Activated CD8-positive, alpha-beta T cell treated with anti-CD3 and anti-CD28 coated beads, Interleukin-2, amount 10 ng/mL, durations not matched to agents 7 days and 5 days (primary cell): ENCODE measurements at regions of chr3 and their contacts with region 1.

Region 1: GRCh38 chr3:108914774-108915641 is 38.7 kb downstream of the GUCA1C start:
- DNase-seq: peak; percentile 77
- ATAC-seq: peak; percentile 96
- H3K4me3 Mint-ChIP-seq: no peak overlapping the region
- H3K27ac Mint-ChIP-seq: peak overlapping the region; percentile 26
- H3K4me1 Mint-ChIP-seq: peaks cover 16% of the 10 kb centered on the region
- H3K27me3 Mint-ChIP-seq: peaks cover 18% of the 10 kb centered on the region

Region 2: GRCh38 chr3:108602249-108602934 is 312.6 kb before region 1 on chr3:
- CTCF ChIA-PET with region 1: interaction called, 14 read pairs
- POLR2A ChIA-PET with region 1: no interaction called
- DNase-seq: peak; percentile 66
- ATAC-seq: peak; percentile 78
- H3K4me3 Mint-ChIP-seq: peak overlapping the region; percentile 65
- H3K27ac Mint-ChIP-seq: peak overlapping the region; percentile 86
- H3K4me1 Mint-ChIP-seq: peaks cover 54% of the 10 kb centered on the region
- H3K27me3 Mint-ChIP-seq: no peaks in the 10 kb centered on the region

Region 3: GRCh38 chr3:108669208-108669607 is 245.8 kb before region 1 on chr3:
- CTCF ChIA-PET with region 1: interaction called, 131 read pairs
- POLR2A ChIA-PET with region 1: no interaction called
- DNase-seq: no peak
- ATAC-seq: no peak
- H3K4me3 Mint-ChIP-seq: no peak overlapping the region
- H3K27ac Mint-ChIP-seq: no peak overlapping the region
- H3K4me1 Mint-ChIP-seq: peaks cover 19% of the 10 kb centered on the region
- H3K27me3 Mint-ChIP-seq: no peaks in the 10 kb centered on the region

Region 4: DNA sequence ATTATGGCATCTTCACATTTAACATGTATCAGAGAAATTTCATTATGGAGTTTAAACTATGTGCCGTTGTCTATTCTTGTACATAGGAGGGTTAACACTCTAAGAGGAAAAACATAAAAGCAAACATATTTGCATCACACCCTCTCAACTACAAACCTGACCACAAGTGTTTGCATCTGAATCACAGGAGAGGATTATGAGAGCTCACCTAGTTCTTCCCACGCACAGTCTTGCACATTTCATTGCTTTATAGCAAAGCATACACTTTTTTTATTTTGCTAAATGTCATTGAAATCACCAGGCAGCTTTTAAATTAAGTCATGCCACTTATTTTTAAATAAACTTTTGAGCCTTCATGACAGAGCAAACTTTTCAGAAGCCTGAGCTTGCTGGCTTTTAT is 79.9 kb before region 1 on chr3:
- CTCF ChIA-PET with region 1: interaction called, 24 read pairs
- POLR2A ChIA-PET with region 1: no interaction called
- DNase-seq: peak; percentile 54
- ATAC-seq: peak; percentile 71
- H3K4me3 Mint-ChIP-seq: peak overlapping the region; percentile 53
- H3K27ac Mint-ChIP-seq: peak overlapping the region; percentile 77
- H3K4me1 Mint-ChIP-seq: peaks cover 82% of the 10 kb centered on the region
- H3K27me3 Mint-ChIP-seq: no peaks in the 10 kb centered on the region

Region 5: GRCh38 chr3:108883373-108883772 is 31.6 kb before region 1 on chr3:
- CTCF ChIA-PET with region 1: interaction called, 12 read pairs
- POLR2A ChIA-PET with region 1: no interaction called
- DNase-seq: no peak
- ATAC-seq: no peak
- H3K4me3 Mint-ChIP-seq: no peak overlapping the region
- H3K27ac Mint-ChIP-seq: peak overlapping the region; percentile 58
- H3K4me1 Mint-ChIP-seq: peaks cover 9% of the 10 kb centered on the region
- H3K27me3 Mint-ChIP-seq: no peaks in the 10 kb centered on the region

Region 6: DNA sequence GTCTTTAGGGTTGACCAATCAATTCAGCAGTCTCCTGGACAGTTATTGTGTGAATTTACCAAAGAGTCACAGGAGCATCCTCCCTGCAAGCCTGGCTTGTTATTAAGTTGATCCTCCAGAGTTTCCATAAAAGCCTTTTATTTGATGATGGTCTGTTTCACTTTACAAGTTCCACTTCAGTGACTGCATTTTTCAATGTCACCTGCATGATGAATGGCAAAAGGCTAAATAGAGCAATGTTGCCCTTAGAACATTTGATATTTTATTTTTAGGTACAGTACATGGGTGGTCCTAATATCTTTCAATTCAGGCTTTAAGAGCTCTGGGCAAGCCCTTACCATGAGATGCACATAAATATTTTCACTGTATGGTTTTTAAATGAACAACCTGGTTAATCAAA is 16.0 kb after region 1 on chr3:
- CTCF ChIA-PET with region 1: interaction called, 13 read pairs
- POLR2A ChIA-PET with region 1: no interaction called
- DNase-seq: no peak
- ATAC-seq: no peak
- H3K4me3 Mint-ChIP-seq: no peak overlapping the region
- H3K27ac Mint-ChIP-seq: no peak overlapping the region
- H3K4me1 Mint-ChIP-seq: no peaks in the 10 kb centered on the region
- H3K27me3 Mint-ChIP-seq: peaks cover 6% of the 10 kb centered on the region

Region 7: DNA sequence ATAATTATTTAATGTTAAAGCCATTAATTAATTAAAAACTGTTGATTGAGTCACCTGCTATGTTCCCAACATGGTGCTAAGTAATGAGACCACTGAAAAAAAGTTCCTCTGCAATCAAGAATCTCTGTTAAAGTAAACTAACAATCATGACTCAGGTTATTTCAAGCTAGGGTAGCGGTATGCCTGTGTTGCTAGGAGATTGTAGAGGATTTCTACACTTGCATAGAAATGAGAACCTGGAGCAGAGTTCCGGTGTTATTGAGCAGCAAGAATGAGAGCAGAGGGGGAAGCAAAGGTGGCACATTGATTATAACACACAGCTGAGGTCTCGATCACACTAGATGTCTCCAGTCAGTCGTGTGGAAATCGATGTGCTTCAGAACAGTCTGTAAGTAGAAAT is 262.9 kb after region 1 on chr3:
- CTCF ChIA-PET with region 1: no interaction called
- POLR2A ChIA-PET with region 1: no interaction called
- DNase-seq: no peak
- ATAC-seq: no peak
- H3K4me3 Mint-ChIP-seq: no peak overlapping the region
- H3K27ac Mint-ChIP-seq: no peak overlapping the region
- H3K4me1 Mint-ChIP-seq: no peaks in the 10 kb centered on the region
- H3K27me3 Mint-ChIP-seq: no peaks in the 10 kb centered on the region

Region 8: DNA sequence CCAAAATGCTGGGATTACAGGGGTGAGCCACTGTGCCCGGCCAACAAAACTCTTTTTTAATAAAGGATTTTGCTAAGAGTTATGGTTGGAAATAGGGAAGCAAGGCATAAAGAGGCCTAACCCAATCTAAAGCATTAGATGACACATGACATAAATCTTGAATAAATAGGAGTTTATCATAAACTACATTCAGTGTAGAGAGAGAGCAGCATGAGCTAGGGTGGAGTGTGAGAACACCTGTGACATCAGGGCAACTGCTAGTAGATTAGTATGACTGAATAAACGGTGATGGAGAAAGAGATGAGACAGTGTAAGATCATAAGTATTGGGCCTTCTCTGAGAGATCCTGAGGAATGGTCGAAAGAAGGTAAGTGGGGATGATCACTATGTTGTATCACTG is 337.6 kb after region 1 on chr3:
- CTCF ChIA-PET with region 1: no interaction called
- POLR2A ChIA-PET with region 1: no interaction called
- DNase-seq: no peak
- ATAC-seq: no peak
- H3K4me3 Mint-ChIP-seq: no peak overlapping the region
- H3K27ac Mint-ChIP-seq: no peak overlapping the region
- H3K4me1 Mint-ChIP-seq: no peaks in the 10 kb centered on the region
- H3K27me3 Mint-ChIP-seq: peaks cover 2% of the 10 kb centered on the region